ENCODE measurements at regions of chr15 and their contacts with region 1.

Region 1: DNA sequence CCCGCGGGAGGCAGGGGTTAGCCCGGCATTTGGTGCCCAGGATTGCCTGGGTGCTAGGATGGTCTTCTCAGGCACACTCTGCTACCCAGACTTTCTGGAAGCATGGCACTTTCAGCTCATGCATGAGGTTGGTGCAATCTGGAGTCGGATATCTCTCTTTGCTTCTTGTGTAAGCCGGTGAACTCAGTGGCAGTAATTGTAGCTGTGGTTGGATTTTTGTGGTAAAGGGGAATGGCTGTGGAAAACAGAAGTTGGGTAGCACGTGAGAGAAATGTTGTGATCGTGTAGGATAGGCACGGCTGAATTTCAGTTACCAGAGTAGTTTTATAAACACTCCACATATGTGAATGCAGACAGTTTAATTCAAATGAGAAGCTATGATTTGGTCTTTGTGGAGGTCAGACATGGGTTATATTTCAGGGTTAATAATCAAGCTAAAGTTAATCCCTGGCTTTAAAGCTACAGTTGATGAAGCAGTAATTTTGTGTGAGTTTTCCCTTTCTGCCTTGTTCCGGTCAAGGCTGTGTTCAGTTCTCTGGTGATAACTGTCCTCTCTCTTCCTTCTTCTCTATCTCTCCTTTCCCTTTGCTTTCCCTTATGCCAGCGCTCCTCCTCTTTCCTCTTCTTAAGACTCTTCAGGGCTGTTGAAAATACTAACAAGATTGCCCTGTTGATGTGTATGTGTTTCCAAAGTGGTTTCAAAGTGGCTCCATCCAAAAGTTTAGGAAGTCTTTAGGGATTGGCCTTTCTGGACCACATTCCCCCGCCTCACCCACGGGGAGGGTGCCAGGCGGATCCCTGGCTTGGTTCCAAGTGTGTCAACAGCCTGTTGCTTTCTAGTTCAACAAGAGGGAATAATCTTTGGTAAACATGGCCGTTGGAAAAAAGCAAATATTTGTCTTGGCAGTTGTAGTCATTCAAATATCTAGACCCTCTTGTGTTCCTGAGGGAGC is 404.7 kb upstream of the C2CD4B start:
- DNase-seq: peak; percentile 85
- ATAC-seq: peak; percentile 75 to 76

Region 2: GRCh38 chr15:62378772-62379498 is 190.8 kb before region 1 on chr15:
- intact Hi-C with region 1: no loop called
- DNase-seq: no peak
- ATAC-seq: no peak

Region 3: GRCh38 chr15:62426387-62426956 is 143.3 kb before region 1 on chr15:
- intact Hi-C with region 1: loop called in 1 of 2 experiments (anchors 10 kb)
- DNase-seq: no peak
- ATAC-seq: peak; percentile 70 to 72